Caco-2 (cell line): ENCODE measurements at regions of chr3 and their contacts with region 1.

Region 1: GRCh38 chr3:170368921-170369320 is 11.4 kb downstream of the SKIL start:
- DNase-seq: no peak
- H3K4me3 ChIP-seq: no peak overlapping the region
- H3K4me3 Mint-ChIP-seq: no peak overlapping the region
- H3K27ac Mint-ChIP-seq: no peak overlapping the region
- H3K4me1 ChIP-seq: no peaks in the 10 kb centered on the region
- H3K4me1 Mint-ChIP-seq: no peaks in the 10 kb centered on the region
- H3K27me3 ChIP-seq: no peaks in the 10 kb centered on the region
- H3K27me3 Mint-ChIP-seq: no peaks in the 10 kb centered on the region
- CTCF ChIP-seq: peak in 1 of 2 experiments; percentile 38

Region 2: GRCh38 chr3:170189398-170190256 is 179.3 kb before region 1 on chr3:
- CTCF ChIA-PET with region 1: no interaction called
- POLR2A ChIA-PET with region 1: no interaction called
- intact Hi-C with region 1: loop called (anchors 1 kb)
- DNase-seq: no peak
- H3K4me3 ChIP-seq: no peak overlapping the region
- H3K4me3 Mint-ChIP-seq: no peak overlapping the region
- H3K27ac Mint-ChIP-seq: no peak overlapping the region
- H3K4me1 ChIP-seq: no peaks in the 10 kb centered on the region
- H3K4me1 Mint-ChIP-seq: no peaks in the 10 kb centered on the region
- H3K27me3 ChIP-seq: no peaks in the 10 kb centered on the region
- H3K27me3 Mint-ChIP-seq: peaks cover 3% of the 10 kb centered on the region
- CTCF ChIP-seq: no peak

Region 3: GRCh38 chr3:170277833-170278580 is 90.9 kb before region 1 on chr3:
- CTCF ChIA-PET with region 1: no interaction called
- POLR2A ChIA-PET with region 1: no interaction called
- intact Hi-C with region 1: no loop called
- DNase-seq: no peak
- H3K4me3 ChIP-seq: no peak overlapping the region
- H3K4me3 Mint-ChIP-seq: no peak overlapping the region
- H3K27ac Mint-ChIP-seq: no peak overlapping the region
- H3K4me1 ChIP-seq: no peaks in the 10 kb centered on the region; the same call in 1 of the 2 replicates
- H3K4me1 Mint-ChIP-seq: peaks cover 11% of the 10 kb centered on the region
- H3K27me3 ChIP-seq: no peaks in the 10 kb centered on the region
- H3K27me3 Mint-ChIP-seq: no peaks in the 10 kb centered on the region
- CTCF ChIP-seq: no peak

Region 4: DNA sequence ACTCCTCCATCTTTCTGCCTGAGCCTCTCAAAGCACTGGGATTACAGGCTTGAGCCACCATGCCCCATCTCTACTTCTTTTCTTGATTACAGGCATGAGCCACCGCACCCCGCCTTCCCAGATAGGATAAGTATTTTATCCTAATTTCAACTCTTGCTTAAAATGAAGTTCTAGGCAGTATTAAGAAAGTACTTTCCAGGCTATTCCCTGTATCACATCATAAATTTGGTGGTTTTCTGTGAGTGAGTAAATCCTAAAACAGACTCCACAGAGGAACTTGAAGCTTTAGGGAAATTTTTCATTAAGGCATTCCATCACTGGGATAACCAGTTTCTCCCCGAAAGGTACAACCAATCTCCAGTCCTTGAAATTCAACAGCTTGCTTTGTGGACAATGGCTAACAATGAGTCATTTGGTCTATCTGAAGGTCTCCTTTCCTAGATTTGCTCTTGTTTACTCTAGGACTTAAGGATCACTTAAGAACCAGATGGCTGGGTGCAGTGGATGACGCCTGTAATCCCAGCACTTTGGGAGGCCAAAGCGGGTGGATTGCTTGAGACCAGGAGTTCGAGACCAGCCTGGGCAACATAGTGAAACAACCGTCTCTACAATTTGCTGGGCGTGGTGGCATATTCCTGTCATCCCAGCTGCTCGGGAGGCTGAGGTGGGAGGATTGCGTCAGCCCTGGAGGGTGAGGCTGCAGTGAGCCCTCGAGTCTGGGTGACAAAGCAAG is 61.1 kb before region 1 on chr3:
- CTCF ChIA-PET with region 1: no interaction called
- POLR2A ChIA-PET with region 1: no interaction called
- intact Hi-C with region 1: loop called (anchors 1 kb)
- DNase-seq: peak; percentile 63 to 66
- H3K4me3 ChIP-seq: no peak overlapping the region
- H3K4me3 Mint-ChIP-seq: peak overlapping the region; percentile 29
- H3K27ac Mint-ChIP-seq: peak overlapping the region; percentile 91
- H3K4me1 ChIP-seq: peaks cover 29% of the 10 kb centered on the region
- H3K4me1 Mint-ChIP-seq: peaks cover 11% of the 10 kb centered on the region
- H3K27me3 ChIP-seq: no peaks in the 10 kb centered on the region
- H3K27me3 Mint-ChIP-seq: no peaks in the 10 kb centered on the region
- CTCF ChIP-seq: no peak

Region 5: DNA sequence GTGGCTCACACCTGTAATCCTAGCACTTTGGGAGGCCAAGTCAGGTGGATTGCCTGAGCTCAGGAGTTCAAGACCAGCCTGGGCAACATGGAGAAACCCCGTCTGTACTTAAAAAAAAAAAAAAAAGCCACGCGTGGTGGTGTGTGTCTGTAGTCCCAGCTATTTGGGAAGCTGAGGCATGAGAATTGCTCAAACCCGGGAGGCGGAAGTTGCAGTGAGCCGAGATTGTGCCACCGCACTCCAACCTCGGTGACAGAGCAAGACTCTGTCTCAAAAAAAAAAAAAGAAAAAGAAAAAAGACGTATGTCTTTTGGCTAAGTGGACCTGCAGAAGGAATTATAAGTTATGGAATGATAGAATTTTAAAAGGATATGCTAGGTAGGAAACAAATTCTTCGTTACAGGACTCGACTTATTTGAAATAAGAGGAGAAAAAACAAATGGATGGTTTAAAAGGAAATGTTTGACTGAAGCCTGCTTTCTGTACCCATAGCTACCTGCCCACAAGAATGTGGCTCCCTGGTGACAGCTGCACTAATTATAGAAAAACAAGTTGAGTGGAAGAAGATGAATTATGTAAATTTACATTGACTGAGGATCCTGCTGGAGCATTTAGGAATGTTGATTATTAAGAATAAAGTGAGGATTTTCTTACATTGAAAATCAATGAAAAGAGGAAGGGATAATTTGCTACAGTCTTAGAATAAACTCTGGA is 47.4 kb before region 1 on chr3:
- CTCF ChIA-PET with region 1: no interaction called
- POLR2A ChIA-PET with region 1: no interaction called
- intact Hi-C with region 1: no loop called
- DNase-seq: no peak
- H3K4me3 ChIP-seq: no peak overlapping the region
- H3K4me3 Mint-ChIP-seq: no peak overlapping the region
- H3K27ac Mint-ChIP-seq: no peak overlapping the region
- H3K4me1 ChIP-seq: peaks cover 12% of the 10 kb centered on the region
- H3K4me1 Mint-ChIP-seq: peaks cover 6% of the 10 kb centered on the region
- H3K27me3 ChIP-seq: no peaks in the 10 kb centered on the region
- H3K27me3 Mint-ChIP-seq: no peaks in the 10 kb centered on the region
- CTCF ChIP-seq: no peak